Esophagus muscularis mucosa (tissue), 4 donors: ENCODE measurements at regions of chr4 and their contacts with region 1.

Region 1: DNA sequence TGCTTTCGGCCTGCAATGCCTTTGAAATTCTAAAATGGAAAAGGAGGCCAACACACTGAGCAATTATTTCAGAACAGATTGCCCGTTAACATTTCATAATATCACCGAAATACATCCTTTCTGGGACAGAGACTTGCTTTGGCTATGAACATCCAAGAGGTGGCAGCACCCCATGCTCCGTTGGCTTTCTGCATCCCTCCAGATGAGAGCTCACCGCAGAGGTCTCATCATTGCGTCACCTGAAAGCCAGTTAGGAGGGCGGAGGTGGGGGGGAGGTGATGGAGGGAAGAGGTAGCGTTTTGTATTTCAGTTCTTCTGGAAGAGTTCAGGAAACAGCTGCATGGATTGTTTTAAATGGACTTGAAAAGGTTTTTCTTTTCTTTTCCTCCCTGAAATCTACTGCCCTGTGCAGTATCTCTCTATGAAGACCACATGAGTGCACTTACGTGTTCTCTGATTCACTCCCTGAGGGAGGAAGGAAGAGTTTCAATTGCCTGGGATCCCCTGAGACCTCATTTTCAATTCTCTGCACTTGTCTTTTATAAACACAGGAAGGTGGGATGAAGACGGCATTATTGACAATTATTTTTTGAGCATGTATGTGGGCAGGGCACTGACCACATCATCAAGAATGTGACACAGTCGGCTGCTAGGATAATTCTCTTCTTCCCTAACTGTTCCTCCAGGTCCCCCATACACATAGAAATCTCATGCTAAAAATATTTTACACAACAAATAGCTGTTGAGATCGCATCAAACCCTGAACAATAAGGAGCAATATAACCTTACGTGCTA is 166.9 kb upstream of the PGRMC2 start:
- DNase-seq: peak; percentile 94
- H3K4me3 ChIP-seq: no peak overlapping the region
- H3K27ac ChIP-seq: peak overlapping the region in 2 of 4 donors; percentile 13 to 28
- H3K4me1 ChIP-seq: peaks cover 11 to 25% (median 18%) of the 10 kb centered on the region in 4 donors
- H3K27me3 ChIP-seq: no peaks in the 10 kb centered on the region
- CTCF ChIP-seq: peak; percentile 77 to 83 (median 82)
- EP300 ChIP-seq: no peak
- POLR2A ChIP-seq: no peak

Region 2: DNA sequence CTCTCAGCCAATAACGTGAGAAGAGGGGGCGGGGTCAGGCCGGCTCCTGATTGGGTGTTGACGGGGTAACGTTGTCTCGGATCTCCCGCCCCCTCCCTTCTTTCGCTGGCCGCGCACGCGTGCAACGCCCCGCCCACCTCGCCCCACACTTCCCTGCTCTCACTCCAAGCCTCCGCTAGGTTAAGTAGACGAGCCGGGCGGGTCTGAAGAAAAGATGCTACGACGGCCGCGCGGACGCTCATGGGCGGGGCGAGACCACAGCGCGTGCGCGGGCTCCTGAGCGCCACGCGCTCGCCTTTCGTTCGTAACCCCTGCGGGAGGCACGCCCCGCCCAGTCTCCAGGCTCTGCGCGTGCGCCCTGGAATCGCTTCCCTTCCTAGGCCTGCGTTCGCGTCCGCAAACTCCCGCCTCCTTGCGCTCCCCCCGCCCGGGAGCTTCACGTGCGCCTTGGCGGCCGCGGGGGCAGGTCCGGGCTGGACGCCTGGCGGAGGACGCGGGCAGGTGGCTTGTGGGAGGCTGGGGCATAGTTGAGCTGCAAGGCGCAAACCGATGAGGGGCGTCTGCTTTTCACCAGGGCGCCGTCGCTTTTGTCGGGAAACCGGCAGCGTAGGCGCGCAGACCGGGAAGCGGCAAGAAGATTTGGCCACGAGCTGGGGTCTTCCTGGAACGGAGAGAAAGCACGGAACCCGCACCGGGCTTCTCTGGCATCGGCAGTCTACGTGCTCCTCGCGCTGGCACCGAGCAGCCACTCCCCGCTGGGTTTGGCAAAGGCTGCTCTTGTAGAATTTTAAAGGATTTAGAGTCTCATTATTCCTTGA is 166.4 kb before region 1 on chr4:
- intact Hi-C with region 1: loop called (anchors 10 kb)
- DNase-seq: peak; percentile 100
- H3K4me3 ChIP-seq: peak overlapping the region; percentile 81 to 96 (median 87)
- H3K27ac ChIP-seq: peak overlapping the region; percentile 94 to 97 (median 95)
- H3K4me1 ChIP-seq: peaks cover 26 to 38% (median 33%) of the 10 kb centered on the region in 4 donors
- H3K27me3 ChIP-seq: no peaks in the 10 kb centered on the region
- CTCF ChIP-seq: peak in 2 of 3 experiments; percentile 35 to 41
- EP300 ChIP-seq: peak; percentile 70
- POLR2A ChIP-seq: peak; percentile 63

Region 3: DNA sequence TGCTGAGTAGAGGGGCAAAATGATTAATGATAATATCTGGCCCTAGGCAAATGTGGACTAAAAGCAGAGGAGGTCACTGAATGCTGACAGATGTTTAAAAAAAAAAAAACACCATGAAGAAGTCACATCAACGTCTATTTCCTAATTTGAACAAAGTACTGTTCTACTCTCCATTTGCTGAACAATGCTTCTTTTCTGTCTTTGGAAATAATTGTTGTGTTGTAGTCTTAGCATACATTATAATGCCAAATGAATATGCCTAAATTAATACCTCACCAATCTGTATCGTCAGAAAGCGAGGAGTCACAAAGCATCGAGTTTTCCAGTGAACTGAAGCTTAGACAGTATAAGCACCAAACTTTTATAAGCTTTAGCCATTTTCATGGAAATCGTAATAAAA is 214.1 kb after region 1 on chr4:
- intact Hi-C with region 1: loop called (anchors 5 kb)
- DNase-seq: no peak
- H3K4me3 ChIP-seq: no peak overlapping the region
- H3K27ac ChIP-seq: no peak overlapping the region
- H3K4me1 ChIP-seq: no peaks in the 10 kb centered on the region
- H3K27me3 ChIP-seq: no peaks in the 10 kb centered on the region
- CTCF ChIP-seq: no peak
- EP300 ChIP-seq: no peak
- POLR2A ChIP-seq: no peak